ENCODE measurements at regions of chr6 and their contacts with region 1.

Region 1: GRCh38 chr6:38493931-38494547 is 145.7 kb downstream of the BTBD9 start:
- DNase-seq: peak; percentile 80 to 85
- H3K4me3 ChIP-seq: no peak overlapping the region
- H3K27ac ChIP-seq: no peak overlapping the region
- H3K4me1 ChIP-seq: no peaks in the 10 kb centered on the region
- H3K27me3 ChIP-seq: no peaks in the 10 kb centered on the region
- CTCF ChIP-seq: peak; percentile 85 to 96 (median 91)
- POLR2A ChIP-seq: no peak

Region 2: DNA sequence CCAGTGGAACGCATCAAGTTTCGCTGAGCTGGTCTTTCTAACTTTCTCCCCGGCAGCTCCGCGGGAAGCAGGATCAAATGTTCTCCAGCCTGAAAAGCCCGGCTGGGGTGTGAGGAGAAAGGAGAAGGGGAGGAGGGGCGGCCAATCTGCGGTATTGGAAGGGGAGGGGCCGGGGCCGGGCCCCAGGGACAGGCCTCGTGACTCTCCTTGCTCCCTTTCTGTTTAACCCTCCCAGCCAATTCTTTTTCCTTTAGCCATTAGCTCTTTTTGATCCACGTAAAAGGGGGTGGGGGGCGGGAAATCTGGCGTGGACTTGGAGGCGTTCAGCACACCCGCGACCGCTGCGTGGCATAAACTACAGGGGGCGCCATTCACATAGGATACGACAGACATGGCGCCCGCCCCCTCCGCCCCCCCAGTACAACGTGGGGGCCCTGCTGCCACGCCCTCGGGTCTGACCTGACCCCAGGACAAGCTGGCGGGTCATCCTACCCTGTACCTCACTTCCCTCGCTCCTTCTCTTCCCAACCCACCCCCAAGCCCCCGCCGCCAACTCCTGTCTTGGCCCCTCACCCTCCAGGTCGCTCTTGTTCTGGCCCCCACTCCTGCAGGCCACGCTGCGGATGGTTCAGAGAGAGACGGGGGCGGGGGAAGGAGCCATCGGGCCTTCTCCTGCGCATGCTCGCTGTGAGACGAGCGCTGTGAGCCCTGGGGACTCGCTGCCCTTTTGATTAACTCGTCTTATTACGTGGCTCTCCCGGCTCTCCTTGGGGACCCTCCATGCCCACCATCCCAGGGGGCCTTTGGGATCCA is 788.6 kb before region 1 on chr6:
- intact Hi-C with region 1: loop called (anchors 5 kb)
- DNase-seq: peak; percentile 84 to 85
- H3K4me3 ChIP-seq: peak overlapping the region in 2 of 3 donors; percentile 25 to 31
- H3K27ac ChIP-seq: peak overlapping the region; percentile 32 to 65 (median 52)
- H3K4me1 ChIP-seq: peaks cover 0 to 9% of the 10 kb centered on the region in 2 donors
- H3K27me3 ChIP-seq: no peaks in the 10 kb centered on the region
- CTCF ChIP-seq: peak; percentile 29 to 73 (median 58)
- POLR2A ChIP-seq: no peak

Region 3: GRCh38 chr6:37777272-37777834 is 716.7 kb before region 1 on chr6:
- intact Hi-C with region 1: loop called (anchors 10 kb)
- DNase-seq: no peak
- H3K4me3 ChIP-seq: no peak overlapping the region
- H3K27ac ChIP-seq: no peak overlapping the region
- H3K4me1 ChIP-seq: no peaks in the 10 kb centered on the region
- H3K27me3 ChIP-seq: no peaks in the 10 kb centered on the region
- CTCF ChIP-seq: no peak
- POLR2A ChIP-seq: no peak